Activated naive CD4-positive, alpha-beta T cell treated with anti-CD3 and anti-CD28 coated beads for 36 hours (primary cell): ENCODE measurements at regions of chr4 and their contacts with region 1.

Region 1: GRCh38 chr4:54233277-54233696 is 4.2 kb downstream of the PDGFRA start:
- DNase-seq: peak; percentile 84
- H3K4me3 Mint-ChIP-seq: peak overlapping the region; percentile 70
- H3K27ac Mint-ChIP-seq: no peak overlapping the region
- H3K4me1 Mint-ChIP-seq: peaks cover 29% of the 10 kb centered on the region
- H3K27me3 Mint-ChIP-seq: peaks cover 57% of the 10 kb centered on the region

Region 2: GRCh38 chr4:52545099-52546069 is 1687.9 kb before region 1 on chr4:
- CTCF ChIA-PET with region 1: interaction called, 5 read pairs
- intact Hi-C with region 1: loop called (anchors 2 kb)
- DNase-seq: peak; percentile 71
- H3K4me3 Mint-ChIP-seq: no peak overlapping the region
- H3K27ac Mint-ChIP-seq: no peak overlapping the region
- H3K4me1 Mint-ChIP-seq: no peaks in the 10 kb centered on the region
- H3K27me3 Mint-ChIP-seq: peaks cover 10% of the 10 kb centered on the region

Region 3: GRCh38 chr4:53015681-53016080 is 1217.6 kb before region 1 on chr4:
- CTCF ChIA-PET with region 1: interaction called, 3 read pairs
- intact Hi-C with region 1: loop called (anchors 1 kb)
- DNase-seq: peak; percentile 49
- H3K4me3 Mint-ChIP-seq: no peak overlapping the region
- H3K27ac Mint-ChIP-seq: no peak overlapping the region
- H3K4me1 Mint-ChIP-seq: peaks cover 36% of the 10 kb centered on the region
- H3K27me3 Mint-ChIP-seq: no peaks in the 10 kb centered on the region

Region 4: DNA sequence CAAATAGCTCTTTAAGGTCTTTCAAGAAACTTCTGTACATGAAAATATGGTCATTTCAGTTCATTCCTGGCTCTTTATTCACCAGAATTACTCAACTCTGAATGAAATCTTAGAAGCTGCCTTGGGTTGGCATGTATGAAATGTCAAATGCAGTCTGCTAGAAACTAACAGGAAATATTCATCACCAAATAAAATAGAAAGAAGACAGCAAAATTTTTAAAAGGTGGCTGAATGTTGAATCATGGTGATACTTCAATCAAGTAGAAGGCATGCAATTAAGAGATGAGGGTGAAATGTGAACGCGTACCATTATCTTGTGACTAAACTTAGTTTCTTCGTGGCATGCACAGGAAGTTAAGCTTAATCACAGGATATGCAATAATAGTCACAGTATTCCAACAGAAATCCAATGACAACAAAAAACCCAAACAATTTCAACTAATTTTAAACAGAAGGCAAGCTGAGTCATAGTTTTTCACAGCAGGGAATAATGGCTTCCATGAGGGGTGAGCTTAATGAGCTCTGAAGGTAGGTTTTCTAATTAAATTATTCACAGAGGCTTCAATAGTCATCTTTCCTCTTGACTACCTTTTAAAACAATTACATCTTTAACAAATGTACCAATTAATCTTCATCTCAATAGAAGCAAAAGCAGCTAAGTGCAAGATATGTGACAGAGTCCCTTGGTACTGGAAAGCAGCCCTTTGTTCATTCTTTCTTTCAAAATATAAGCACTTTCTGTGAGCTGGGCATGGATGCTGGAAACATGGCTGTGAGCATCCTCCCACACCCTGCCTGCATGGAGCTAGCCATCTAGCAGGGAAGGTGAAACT is 911.9 kb before region 1 on chr4:
- CTCF ChIA-PET with region 1: no interaction called
- intact Hi-C with region 1: no loop called
- DNase-seq: no peak
- H3K4me3 Mint-ChIP-seq: no peak overlapping the region
- H3K27ac Mint-ChIP-seq: no peak overlapping the region
- H3K4me1 Mint-ChIP-seq: peaks cover 22% of the 10 kb centered on the region
- H3K27me3 Mint-ChIP-seq: no peaks in the 10 kb centered on the region

Region 5: GRCh38 chr4:53702334-53703266 is 530.7 kb before region 1 on chr4:
- CTCF ChIA-PET with region 1: interaction called, 5 read pairs
- intact Hi-C with region 1: loop called (anchors 5 kb)
- DNase-seq: no peak
- H3K4me3 Mint-ChIP-seq: no peak overlapping the region
- H3K27ac Mint-ChIP-seq: no peak overlapping the region
- H3K4me1 Mint-ChIP-seq: peaks cover 12% of the 10 kb centered on the region
- H3K27me3 Mint-ChIP-seq: peaks cover 27% of the 10 kb centered on the region

Region 6: DNA sequence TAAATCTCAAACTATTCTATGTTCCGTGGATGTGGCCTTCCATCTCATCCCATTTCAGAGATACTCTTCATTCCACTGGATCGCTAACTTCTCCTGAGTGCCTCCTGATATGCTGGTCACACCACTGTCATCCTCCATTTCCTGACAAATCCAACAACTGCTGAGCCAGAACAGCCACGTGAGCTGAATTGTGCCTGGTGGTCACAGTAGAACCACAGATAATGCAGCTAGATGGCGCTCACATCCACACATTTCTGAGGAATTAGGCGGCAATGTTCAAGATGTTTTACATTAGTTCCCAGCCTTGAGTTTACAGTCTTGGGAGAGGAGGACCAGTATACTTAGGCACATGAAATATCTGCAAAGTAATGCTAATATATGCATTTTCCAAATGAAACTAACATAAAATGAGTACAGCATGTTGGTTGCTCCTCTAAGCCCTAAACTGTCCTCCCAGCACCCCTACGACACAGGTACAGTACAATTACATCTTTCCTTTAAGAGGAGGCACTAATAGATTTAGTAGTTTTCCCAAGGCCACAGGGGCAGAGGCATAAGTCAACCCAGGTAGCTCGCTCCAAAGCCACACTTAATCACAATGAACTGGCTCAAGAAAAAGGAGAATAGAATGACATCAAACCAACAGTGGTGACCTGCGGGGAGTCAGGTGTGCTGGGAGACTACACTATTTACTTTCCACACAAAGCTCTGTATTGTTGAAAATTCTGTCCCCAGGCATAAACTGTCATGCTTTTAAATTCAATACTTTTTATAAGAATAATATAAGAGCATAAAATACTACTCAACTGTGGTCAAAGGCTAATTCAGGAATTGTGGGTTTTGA is 303.1 kb before region 1 on chr4:
- CTCF ChIA-PET with region 1: interaction called, 78 read pairs
- intact Hi-C with region 1: loop called (anchors 1 kb)
- DNase-seq: peak; percentile 83
- H3K4me3 Mint-ChIP-seq: no peak overlapping the region
- H3K27ac Mint-ChIP-seq: no peak overlapping the region
- H3K4me1 Mint-ChIP-seq: no peaks in the 10 kb centered on the region
- H3K27me3 Mint-ChIP-seq: peaks cover 8% of the 10 kb centered on the region

Region 7: GRCh38 chr4:54187148-54187547 is 46.1 kb before region 1 on chr4:
- CTCF ChIA-PET with region 1: no interaction called
- intact Hi-C with region 1: no loop called
- DNase-seq: no peak
- H3K4me3 Mint-ChIP-seq: no peak overlapping the region
- H3K27ac Mint-ChIP-seq: no peak overlapping the region
- H3K4me1 Mint-ChIP-seq: no peaks in the 10 kb centered on the region
- H3K27me3 Mint-ChIP-seq: peaks cover 8% of the 10 kb centered on the region

Region 8: DNA sequence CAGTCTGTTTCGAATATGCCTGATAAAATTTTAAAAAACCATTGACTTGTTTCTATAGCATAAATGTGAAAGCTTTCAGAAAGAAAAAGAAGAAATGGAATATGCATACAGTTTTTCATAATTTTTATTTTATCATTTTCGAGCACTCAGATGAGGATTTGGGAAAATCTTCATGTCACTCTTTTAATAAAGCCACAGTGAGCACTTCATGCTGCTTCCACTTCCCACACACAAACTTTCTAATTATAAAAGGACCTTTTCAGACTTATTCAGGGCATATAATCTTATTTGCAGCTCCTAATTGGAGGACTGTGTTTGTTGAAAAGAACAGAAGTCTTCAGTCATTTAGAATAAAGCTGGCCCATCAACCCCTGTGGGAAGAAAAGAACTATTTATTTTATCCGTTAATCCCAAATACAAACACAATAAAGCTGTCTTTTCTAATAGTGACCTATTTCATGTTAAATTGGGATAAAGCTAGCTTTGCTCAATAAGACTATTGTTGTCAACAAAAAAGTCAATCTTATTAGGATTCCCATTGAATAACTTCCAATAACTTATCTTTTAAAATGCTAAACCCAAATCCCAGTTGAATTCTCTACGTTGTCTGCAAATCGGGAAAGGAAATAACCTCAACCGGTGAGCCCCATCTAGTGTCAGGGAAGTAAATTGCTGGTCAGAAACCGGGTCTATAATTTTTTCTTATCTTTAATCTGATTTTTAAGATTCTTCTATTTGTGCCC is 207.3 kb after region 1 on chr4:
- CTCF ChIA-PET with region 1: interaction called, 3 read pairs
- intact Hi-C with region 1: loop called (anchors 1 kb)
- DNase-seq: peak; percentile 30
- H3K4me3 Mint-ChIP-seq: no peak overlapping the region
- H3K27ac Mint-ChIP-seq: no peak overlapping the region
- H3K4me1 Mint-ChIP-seq: no peaks in the 10 kb centered on the region
- H3K27me3 Mint-ChIP-seq: peaks cover 28% of the 10 kb centered on the region